Dorsolateral prefrontal cortex (tissue), 120 donors: ENCODE measurements at regions of chr22 and their contacts with region 1.

Region 1: GRCh38 chr22:40679964-40680818 is 907 bp downstream of the MCHR1 start:
- DNase-seq: peak in 4 of 10 donors; percentile 15 to 51 (median 40)
- H3K4me3 ChIP-seq: peak overlapping the region; percentile 6 to 75 (median 58)
- H3K27ac ChIP-seq: peak overlapping the region in 52 of 59 donors; percentile 3 to 90 (median 69)
- H3K27me3 ChIP-seq: peaks cover 0 to 5% (median 0%) of the 10 kb centered on the region in 45 donors
- CTCF ChIP-seq: peak in 4 of 56 donors; percentile 10 to 16 (median 14)

Region 2: DNA sequence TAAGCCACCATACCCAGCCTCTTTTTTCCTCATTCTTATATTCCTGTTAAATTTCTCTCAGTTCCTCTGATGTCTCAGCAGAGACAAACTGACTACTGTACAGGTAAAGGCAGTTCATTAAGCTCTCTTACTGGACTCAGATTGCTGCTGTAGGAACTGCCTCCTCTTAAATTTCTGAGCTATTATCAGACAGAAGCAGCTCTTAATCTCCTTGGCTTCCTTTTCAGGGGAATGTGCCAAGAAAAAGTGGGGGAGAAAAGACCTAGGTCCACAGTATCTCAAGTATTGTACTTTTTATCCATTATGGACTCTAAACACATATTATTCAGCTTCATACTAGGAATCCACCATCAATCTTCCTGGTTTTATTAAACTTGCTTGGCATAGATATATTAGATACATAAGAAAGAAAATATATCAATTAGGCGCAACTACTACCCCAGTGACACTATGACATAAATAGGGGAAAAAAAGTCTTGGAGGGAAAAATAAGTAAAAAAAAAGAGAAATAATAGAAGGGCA is 69.8 kb before region 1 on chr22:
- intact Hi-C with region 1: no loop called
- DNase-seq: no peak
- H3K4me3 ChIP-seq: no peak overlapping the region
- H3K27ac ChIP-seq: no peak overlapping the region
- H3K27me3 ChIP-seq: no peaks in the 10 kb centered on the region
- CTCF ChIP-seq: no peak

Region 3: GRCh38 chr22:40757071-40757470 is 76.9 kb after region 1 on chr22:
- intact Hi-C with region 1: loop called in 1 of 2 experiments (anchors 10 kb)
- DNase-seq: no peak
- H3K4me3 ChIP-seq: no peak overlapping the region
- H3K27ac ChIP-seq: no peak overlapping the region
- H3K27me3 ChIP-seq: no peaks in the 10 kb centered on the region
- CTCF ChIP-seq: no peak

Region 4: DNA sequence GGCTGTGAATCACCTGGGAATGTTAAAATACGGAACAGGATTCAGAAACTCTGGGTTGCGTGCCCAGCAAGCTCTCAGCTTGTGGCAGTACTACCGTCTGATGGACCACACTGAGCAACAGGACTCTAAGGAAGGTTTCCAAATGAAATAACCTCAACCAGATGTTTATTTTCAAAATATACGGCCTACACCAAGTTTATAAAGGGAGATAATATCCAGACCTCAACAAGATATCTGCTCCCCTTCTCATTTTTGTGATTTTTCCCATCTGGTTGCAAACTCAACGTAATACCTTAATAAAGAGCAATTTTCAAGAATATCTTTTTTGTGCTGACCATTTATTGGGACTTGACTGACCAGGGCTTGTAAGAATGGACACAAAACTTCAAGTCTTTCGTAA is 89.6 kb after region 1 on chr22:
- intact Hi-C with region 1: no loop called
- DNase-seq: no peak
- H3K4me3 ChIP-seq: no peak overlapping the region
- H3K27ac ChIP-seq: no peak overlapping the region
- H3K27me3 ChIP-seq: no peaks in the 10 kb centered on the region
- CTCF ChIP-seq: no peak